B cell (primary cell): ENCODE measurements at regions of chr18 and their contacts with region 1.

Region 1: GRCh38 chr18:68847219-68847837 is 49.4 kb downstream of the CCDC102B start:
- DNase-seq: peak; percentile 7
- ATAC-seq: no peak
- H3K4me3 ChIP-seq: no peak overlapping the region
- H3K4me3 Mint-ChIP-seq: no peak overlapping the region
- H3K27ac ChIP-seq: no peak overlapping the region
- H3K27ac Mint-ChIP-seq: no peak overlapping the region
- H3K4me1 ChIP-seq: no peaks in the 10 kb centered on the region
- H3K4me1 Mint-ChIP-seq: no peaks in the 10 kb centered on the region
- H3K27me3 ChIP-seq: no peaks in the 10 kb centered on the region
- H3K27me3 Mint-ChIP-seq: no peaks in the 10 kb centered on the region
- CTCF ChIP-seq: peak; percentile 68

Region 2: DNA sequence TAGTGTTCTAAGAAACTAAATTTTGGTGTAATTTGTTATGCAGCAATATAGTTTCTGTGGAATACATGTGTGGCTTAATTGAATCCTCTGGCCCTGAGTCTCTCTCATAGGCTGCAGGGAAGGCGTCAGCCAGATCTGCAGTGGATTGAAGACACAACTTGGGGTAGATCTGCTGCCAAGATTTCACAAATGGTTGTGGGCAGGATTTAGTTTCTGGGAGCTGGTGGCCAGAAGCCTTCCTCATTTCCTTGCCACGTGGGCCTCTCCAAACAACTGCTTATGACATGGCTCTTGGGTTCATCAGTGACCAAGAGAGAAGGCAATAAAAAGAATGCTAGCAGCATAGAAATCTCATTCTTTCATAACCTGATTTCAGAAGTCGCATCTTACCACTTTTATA is 21.2 kb before region 1 on chr18:
- CTCF ChIA-PET with region 1: no interaction called
- POLR2A ChIA-PET with region 1: no interaction called
- intact Hi-C with region 1: no loop called
- DNase-seq: no peak
- ATAC-seq: no peak
- H3K4me3 ChIP-seq: no peak overlapping the region
- H3K4me3 Mint-ChIP-seq: no peak overlapping the region
- H3K27ac ChIP-seq: no peak overlapping the region
- H3K27ac Mint-ChIP-seq: no peak overlapping the region
- H3K4me1 ChIP-seq: no peaks in the 10 kb centered on the region
- H3K4me1 Mint-ChIP-seq: no peaks in the 10 kb centered on the region
- H3K27me3 ChIP-seq: no peaks in the 10 kb centered on the region
- H3K27me3 Mint-ChIP-seq: no peaks in the 10 kb centered on the region
- CTCF ChIP-seq: no peak

Region 3: GRCh38 chr18:68865021-68865420 is 17.7 kb after region 1 on chr18:
- CTCF ChIA-PET with region 1: no interaction called
- POLR2A ChIA-PET with region 1: no interaction called
- intact Hi-C with region 1: no loop called
- DNase-seq: no peak
- ATAC-seq: no peak
- H3K4me3 ChIP-seq: no peak overlapping the region
- H3K4me3 Mint-ChIP-seq: no peak overlapping the region
- H3K27ac ChIP-seq: no peak overlapping the region
- H3K27ac Mint-ChIP-seq: no peak overlapping the region
- H3K4me1 ChIP-seq: no peaks in the 10 kb centered on the region
- H3K4me1 Mint-ChIP-seq: no peaks in the 10 kb centered on the region
- H3K27me3 ChIP-seq: no peaks in the 10 kb centered on the region
- H3K27me3 Mint-ChIP-seq: no peaks in the 10 kb centered on the region
- CTCF ChIP-seq: no peak

Region 4: GRCh38 chr18:70082430-70082829 is 1235.1 kb after region 1 on chr18:
- CTCF ChIA-PET with region 1: interaction called, 9 read pairs
- POLR2A ChIA-PET with region 1: no interaction called
- intact Hi-C with region 1: loop called (anchors 2 kb)
- DNase-seq: no peak
- ATAC-seq: no peak
- H3K4me3 ChIP-seq: no peak overlapping the region
- H3K4me3 Mint-ChIP-seq: no peak overlapping the region
- H3K27ac ChIP-seq: no peak overlapping the region
- H3K27ac Mint-ChIP-seq: no peak overlapping the region
- H3K4me1 ChIP-seq: no peaks in the 10 kb centered on the region
- H3K4me1 Mint-ChIP-seq: no peaks in the 10 kb centered on the region
- H3K27me3 ChIP-seq: no peaks in the 10 kb centered on the region
- H3K27me3 Mint-ChIP-seq: no peaks in the 10 kb centered on the region
- CTCF ChIP-seq: no peak